ENCODE measurements at regions of chr11 and their contacts with region 1.

Region 1: DNA sequence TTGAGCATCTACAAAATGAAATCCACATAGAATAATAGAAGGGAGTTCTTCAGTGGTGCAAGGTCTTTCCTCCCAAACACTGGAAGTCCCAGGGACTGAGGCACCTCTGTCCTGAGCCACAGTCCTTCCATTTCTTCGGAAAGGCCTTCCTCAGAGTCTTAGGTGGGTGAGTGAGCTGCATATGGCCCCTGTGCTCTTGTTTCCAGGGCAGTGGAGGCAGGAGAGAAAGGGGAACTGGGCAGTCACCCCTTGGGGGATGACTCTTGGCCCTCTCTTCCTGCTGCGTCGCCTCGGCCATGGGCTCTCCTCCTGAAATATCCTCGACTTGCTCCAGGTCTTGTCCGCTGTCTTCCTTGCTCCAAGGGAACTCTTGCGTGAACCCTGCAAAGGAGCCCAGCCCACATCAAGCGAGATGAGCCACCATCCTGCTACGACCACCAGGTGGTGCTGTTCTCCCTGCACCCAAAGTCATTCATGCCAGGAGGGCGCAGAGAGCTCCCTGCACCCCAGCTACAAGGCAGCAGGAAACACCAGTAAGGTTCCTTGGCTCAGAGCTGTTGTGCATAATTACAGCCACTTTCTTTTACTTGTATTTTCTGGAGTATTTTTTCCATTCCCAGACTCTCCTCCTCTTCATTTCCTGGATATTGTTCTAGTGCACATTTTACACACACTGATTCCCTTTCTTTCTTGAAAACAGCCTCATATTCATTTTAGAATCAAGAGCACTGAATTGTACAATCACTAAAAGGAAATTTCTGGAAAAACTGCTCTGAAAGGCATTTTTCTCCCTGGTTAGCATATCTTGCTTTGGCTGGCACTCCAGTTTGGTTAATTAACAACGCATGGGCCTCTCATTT is 397.8 kb downstream of the OPCML start:
- DNase-seq: peak; percentile 32
- ATAC-seq: peak; percentile 84
- H3K4me3 ChIP-seq: no peak overlapping the region
- H3K27ac ChIP-seq: no peak overlapping the region
- H3K4me1 ChIP-seq: no peaks in the 10 kb centered on the region
- H3K27me3 ChIP-seq: peaks cover 2% of the 10 kb centered on the region; the same call in 1 of the 2 replicates
- CTCF ChIP-seq: peak; percentile 91

Region 2: DNA sequence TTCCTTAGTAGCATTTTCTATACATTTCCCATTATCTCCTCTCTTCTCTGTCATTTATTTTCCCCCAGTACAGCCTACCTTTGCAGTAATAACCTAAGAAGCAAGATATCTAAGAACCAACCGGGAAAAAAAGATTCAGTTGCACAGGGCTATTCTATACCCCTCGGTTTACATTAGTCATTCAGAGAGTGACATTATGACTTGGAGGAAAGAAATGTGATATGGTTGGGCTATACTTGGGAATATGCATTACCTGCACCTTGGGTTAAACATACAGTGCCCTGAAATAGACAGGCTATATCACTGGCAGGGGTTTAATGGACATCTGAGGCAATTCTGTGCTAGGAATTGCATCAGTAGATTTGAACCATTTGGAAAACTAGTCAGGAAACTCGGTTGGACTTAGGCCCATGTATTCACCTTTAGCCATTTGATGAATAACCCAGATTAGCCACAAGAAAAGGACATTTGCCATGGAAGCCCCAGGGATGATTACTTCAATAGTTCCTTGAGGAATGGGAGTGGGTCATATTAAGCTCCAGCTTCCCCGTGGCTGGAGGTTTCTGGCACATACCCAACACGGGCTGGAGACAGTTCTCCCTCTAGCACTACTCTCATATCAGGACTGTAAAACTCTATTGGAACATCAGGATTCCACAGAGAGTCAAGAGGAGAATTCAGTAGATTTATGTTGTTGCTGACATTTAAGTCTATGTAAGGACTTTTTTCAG is 790.9 kb before region 1 on chr11:
- CTCF ChIA-PET with region 1: no interaction called
- POLR2A ChIA-PET with region 1: no interaction called
- in situ Hi-C with region 1: no loop called
- intact Hi-C with region 1: no loop called
- DNase-seq: no peak
- ATAC-seq: no peak
- H3K4me3 ChIP-seq: no peak overlapping the region
- H3K27ac ChIP-seq: no peak overlapping the region
- H3K4me1 ChIP-seq: no peaks in the 10 kb centered on the region
- H3K27me3 ChIP-seq: no peaks in the 10 kb centered on the region
- CTCF ChIP-seq: no peak

Region 3: GRCh38 chr11:133821776-133822175 is 687.2 kb after region 1 on chr11:
- CTCF ChIA-PET with region 1: interaction called, 5 read pairs
- POLR2A ChIA-PET with region 1: no interaction called
- in situ Hi-C with region 1: no loop called
- intact Hi-C with region 1: loop called (anchors 5 kb)
- DNase-seq: no peak
- ATAC-seq: peak; percentile 87
- H3K4me3 ChIP-seq: no peak overlapping the region
- H3K27ac ChIP-seq: no peak overlapping the region
- H3K4me1 ChIP-seq: no peaks in the 10 kb centered on the region
- H3K27me3 ChIP-seq: peaks cover 16% of the 10 kb centered on the region; the same call in 1 of the 2 replicates
- CTCF ChIP-seq: peak; percentile 89

Region 4: GRCh38 chr11:133834682-133835592 is 700.4 kb after region 1 on chr11:
- CTCF ChIA-PET with region 1: interaction called, 7 read pairs
- POLR2A ChIA-PET with region 1: no interaction called
- in situ Hi-C with region 1: no loop called
- intact Hi-C with region 1: loop called (anchors 5 kb)
- DNase-seq: peak; percentile 41
- ATAC-seq: peak; percentile 93
- H3K4me3 ChIP-seq: no peak overlapping the region
- H3K27ac ChIP-seq: no peak overlapping the region
- H3K4me1 ChIP-seq: no peaks in the 10 kb centered on the region
- H3K27me3 ChIP-seq: peaks cover 2% of the 10 kb centered on the region; the same call in 1 of the 2 replicates
- CTCF ChIP-seq: peak; percentile 81

Measured in Panc1 (cell line).